ENCODE measurements at regions of chr11 and their contacts with region 1.

Region 1: DNA sequence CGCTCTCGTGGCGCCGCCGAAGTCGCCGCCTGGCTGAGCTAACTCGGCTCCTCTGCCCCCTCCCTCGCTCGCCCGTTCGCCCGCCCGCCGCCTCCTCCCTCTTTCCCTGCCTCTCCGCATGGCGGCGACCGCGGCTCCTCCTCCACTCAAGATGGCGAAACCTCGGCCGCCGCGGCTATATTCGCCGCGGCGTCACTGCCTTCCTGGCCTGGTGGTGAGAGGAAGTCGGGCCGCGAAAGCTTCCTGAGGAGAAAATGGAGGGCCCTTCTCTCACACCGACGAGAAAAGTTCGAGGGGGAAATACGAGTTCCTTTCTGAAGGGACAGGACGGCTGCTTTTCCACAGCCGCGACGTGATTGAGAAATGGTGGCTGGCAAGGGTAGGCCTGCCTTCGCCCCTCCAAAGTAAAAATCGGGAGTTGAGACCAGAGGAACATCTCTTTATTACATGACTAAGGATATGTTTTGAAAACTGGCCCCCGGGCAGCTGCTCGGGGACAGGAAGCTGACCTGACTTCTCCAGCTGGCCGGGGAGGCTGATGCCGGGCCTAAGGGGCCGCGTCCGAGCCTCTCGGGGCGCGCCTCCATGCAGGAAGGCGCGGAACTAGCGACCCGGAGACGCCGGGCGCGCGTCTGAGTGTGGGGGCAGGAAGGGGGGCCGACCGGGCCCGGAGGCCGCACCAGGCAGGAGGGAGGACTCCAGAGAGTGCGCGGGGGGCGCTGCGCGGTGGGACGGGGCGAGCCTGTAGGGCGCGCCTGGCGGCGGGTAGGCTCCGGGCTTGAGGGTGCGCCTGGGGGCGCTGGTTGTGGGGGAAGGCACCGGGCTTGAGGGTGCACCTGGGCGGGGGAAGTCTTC is at the start of gene DDX6:
- DNase-seq: peak; percentile 67
- ATAC-seq: peak; percentile 80
- H3K4me3 ChIP-seq: peak within 1 kb of the TSS; percentile 91 to 98 (median 97)
- H3K27ac ChIP-seq: peak within 1 kb of the TSS; percentile 99
- H3K4me1 ChIP-seq: peaks cover 34% of the 10 kb centered on the region
- H3K27me3 ChIP-seq: peaks cover 0 to 2% of the 10 kb centered on the region in 2 experiments; a peak in 2 of 5 replicates
- CTCF ChIP-seq: peak; percentile 64
- EP300 ChIP-seq: no peak
- POLR2A ChIP-seq: peak; percentile 58 to 83
- RAD21 ChIP-seq: no peak
- total RNA-seq, gene DDX6: 59.2 and 163 TPM in 2 replicates

Region 2: DNA sequence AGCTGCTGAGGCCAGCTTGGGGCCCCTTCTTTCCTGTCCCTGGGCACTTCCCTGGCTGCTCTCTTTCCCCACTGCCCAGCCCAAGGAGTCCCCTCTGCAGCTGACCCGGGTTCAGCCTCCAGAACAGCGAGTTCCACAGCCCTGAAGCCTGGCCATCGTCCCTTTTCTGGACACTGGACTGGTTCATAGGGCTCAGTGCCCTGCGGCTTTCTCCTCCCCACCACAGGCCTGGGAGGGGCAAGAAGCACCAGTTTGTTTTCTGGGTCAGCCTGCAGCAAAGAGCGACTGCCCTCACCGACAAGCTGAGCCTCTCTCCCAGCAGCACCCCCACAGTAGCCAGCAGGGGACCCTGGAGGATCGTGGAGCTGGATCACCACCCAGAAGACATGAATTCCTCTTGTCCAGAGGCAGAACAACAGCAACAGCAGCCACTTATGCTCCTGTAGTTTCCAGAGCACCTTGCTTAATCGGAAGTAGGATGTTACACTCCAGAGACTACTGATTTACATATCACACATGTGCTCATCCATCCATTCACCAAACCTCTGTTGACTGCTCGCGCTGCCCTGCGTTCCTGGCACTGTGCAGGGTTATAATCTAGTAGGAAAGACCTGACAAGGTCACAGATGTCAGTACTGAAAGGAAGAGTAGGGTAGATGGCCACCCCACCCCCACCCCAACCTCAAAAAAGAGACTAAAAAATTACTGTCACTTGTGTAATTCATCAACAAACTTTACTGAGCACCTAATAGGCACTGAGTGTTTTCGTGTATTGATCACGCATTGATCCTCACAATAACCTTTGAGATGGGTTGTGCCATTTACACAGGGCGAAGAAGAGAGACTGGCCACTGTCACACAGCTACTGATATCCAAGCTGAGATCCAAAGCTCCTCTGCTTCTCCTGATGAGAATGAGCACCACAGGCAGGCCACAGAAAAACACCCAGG is 79.3 kb after region 1 on chr11:
- CTCF ChIA-PET with region 1: no interaction called
- POLR2A ChIA-PET with region 1: interaction called, 15 read pairs
- in situ Hi-C with region 1: no loop called
- intact Hi-C with region 1: no loop called
- DNase-seq: peak; percentile 28
- ATAC-seq: peak; percentile 80
- H3K4me3 ChIP-seq: peak overlapping the region; percentile 43 to 68 (median 54)
- H3K27ac ChIP-seq: peak overlapping the region; percentile 20
- H3K4me1 ChIP-seq: peaks cover 18% of the 10 kb centered on the region
- H3K27me3 ChIP-seq: peaks cover 1 to 8% of the 10 kb centered on the region in 2 experiments; a peak in 2 of 5 replicates
- CTCF ChIP-seq: peak; percentile 56
- EP300 ChIP-seq: no peak
- POLR2A ChIP-seq: no peak
- RAD21 ChIP-seq: no peak

Region 3: GRCh38 chr11:118921929-118922744 is 130.8 kb after region 1 on chr11:
- CTCF ChIA-PET with region 1: no interaction called
- POLR2A ChIA-PET with region 1: interaction called, 14 read pairs
- in situ Hi-C with region 1: no loop called
- intact Hi-C with region 1: no loop called
- DNase-seq: peak; percentile 80
- ATAC-seq: peak; percentile 40
- H3K4me3 ChIP-seq: peak overlapping the region; percentile 87 to 97 (median 90)
- H3K27ac ChIP-seq: peak overlapping the region; percentile 88
- H3K4me1 ChIP-seq: peaks cover 83% of the 10 kb centered on the region
- H3K27me3 ChIP-seq: no peaks in the 10 kb centered on the region; a peak in 1 of 5 replicates
- CTCF ChIP-seq: no peak
- EP300 ChIP-seq: peak in 1 of 2 experiments; percentile 36; a peak in 1 of 4 replicates
- POLR2A ChIP-seq: peak in 1 of 2 experiments; percentile 51; a peak in 2 of 4 replicates
- RAD21 ChIP-seq: no peak

Measured in HepG2 (cell line).